ENCODE measurements at regions of chr5 and their contacts with region 1.

Region 1: GRCh38 chr5:38193015-38193581 is 65.3 kb upstream of the EGFLAM start:
- DNase-seq: peak; percentile 83
- H3K27ac ChIP-seq: no peak overlapping the region
- CTCF ChIP-seq: peak; percentile 93

Region 2: DNA sequence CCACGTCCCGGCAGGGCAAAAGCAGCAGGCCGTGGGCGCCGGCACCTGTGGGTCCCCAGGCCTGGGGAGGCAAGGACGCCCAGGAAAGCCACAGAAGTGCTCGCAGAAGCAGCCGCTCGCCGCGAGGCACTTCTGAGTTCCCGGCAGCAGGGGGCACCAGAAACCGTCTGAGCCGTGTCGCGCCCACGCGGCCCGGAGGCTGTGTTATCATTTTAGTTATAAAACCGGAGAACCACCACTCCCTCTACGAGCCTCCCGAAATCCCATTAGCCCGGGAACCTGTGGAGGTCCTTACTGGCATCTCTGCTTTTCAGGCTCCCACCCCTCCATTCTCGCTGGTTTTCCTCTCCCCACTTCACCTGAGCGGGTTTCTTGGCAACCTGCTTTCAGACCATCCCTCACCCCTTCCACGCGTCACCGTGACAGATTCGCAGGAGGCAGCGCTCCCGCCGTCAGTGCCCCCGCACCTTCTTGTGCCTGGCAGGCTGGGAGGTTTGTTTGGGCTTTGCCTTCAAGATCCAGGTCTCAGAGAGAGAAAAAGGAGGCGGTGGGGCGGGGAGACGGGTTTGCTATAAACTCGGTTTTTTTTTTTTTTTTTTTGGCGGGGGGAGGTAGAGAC is 355.6 kb before region 1 on chr5:
- CTCF ChIA-PET with region 1: interaction called, 23 read pairs
- POLR2A ChIA-PET with region 1: no interaction called
- DNase-seq: peak; percentile 80
- H3K27ac ChIP-seq: no peak overlapping the region
- CTCF ChIP-seq: peak; percentile 89

Region 3: DNA sequence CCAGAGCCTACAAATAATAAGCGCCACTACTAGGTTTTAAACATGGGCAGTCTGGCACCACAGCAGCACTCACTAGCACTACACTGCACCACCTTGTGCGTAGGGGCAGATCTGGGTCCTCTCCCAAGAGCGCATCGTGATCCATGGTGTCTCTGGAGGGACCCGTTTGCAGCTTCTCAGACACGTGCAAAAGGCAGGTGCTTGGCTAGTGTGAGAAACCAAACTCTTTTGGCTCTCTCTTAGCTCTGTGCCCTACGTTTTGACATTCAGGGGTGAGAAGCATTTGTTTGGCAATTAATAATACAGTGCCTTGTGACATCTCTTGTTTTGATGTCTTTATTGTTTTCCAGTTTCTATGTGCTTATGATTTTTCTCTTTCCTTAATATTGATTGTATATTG is 10.1 kb before region 1 on chr5:
- CTCF ChIA-PET with region 1: no interaction called
- POLR2A ChIA-PET with region 1: no interaction called
- DNase-seq: no peak
- H3K27ac ChIP-seq: no peak overlapping the region
- CTCF ChIP-seq: no peak

Measured in RWPE1 (cell line).